Heart left ventricle (tissue), 16 donors: ENCODE measurements at regions of chr2 and their contacts with region 1.

Region 1: DNA sequence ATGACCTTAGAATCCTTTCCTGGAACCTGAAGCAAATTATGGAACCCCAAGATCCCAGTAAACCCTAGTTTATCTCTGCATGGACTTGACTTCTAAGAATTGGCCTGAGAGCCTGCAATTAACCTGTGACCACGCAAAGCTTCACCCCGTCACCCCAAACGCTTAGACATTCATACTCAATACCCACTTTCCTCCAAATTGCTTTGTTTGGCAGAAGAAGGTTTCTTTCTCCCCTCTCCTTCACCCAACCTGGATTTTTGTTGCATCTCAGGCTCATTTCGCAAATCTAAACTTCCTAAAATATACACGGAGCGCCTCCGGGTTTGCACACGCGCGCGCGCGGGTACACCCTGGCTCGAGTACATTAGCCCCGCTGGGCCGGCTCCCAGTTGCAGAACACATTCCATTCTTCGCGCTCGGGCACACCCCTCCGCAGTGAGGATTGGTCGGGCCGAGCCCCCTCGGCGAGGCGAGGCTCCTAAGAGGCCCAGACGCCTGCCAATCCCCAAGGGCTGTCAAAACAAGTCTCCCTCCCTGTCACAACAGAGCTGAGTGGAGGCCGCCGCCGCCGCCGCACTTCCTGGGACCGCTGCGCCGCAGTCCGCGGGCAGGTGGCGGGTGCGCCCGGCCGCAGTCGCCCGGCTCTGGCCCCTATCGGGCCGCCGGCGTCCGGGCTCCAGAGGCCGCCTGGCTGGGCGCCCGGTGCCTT is at the start of gene PLCL1:
- DNase-seq: peak; percentile 93 to 97 (median 95)
- ATAC-seq: peak; percentile 94 to 97 (median 96)
- H3K4me3 ChIP-seq: peak within 1 kb of the TSS; percentile 66 to 91 (median 84)
- H3K27ac ChIP-seq: peak within 1 kb of the TSS; percentile 70 to 90 (median 84)
- H3K4me1 ChIP-seq: peaks cover 0 to 35% (median 16%) of the 10 kb centered on the region in 12 donors
- H3K27me3 ChIP-seq: peaks cover 0 to 7% (median 0%) of the 10 kb centered on the region in 9 donors
- CTCF ChIP-seq: peak in 7 of 12 donors; percentile 17 to 42 (median 27)
- POLR2A ChIP-seq: peak; percentile 36 to 98
- total RNA-seq, gene PLCL1: 65.9 to 126 (median 97.6) TPM

Region 2: GRCh38 chr2:197878792-197879191 is 74.6 kb after region 1 on chr2:
- intact Hi-C with region 1: loop called in 2 of 10 experiments (anchors 5 to 10 kb)
- DNase-seq: no peak
- ATAC-seq: peak in 1 of 4 donors; percentile 27
- H3K4me3 ChIP-seq: no peak overlapping the region
- H3K27ac ChIP-seq: peak overlapping the region in 6 of 12 donors; percentile 13 to 43 (median 20)
- H3K4me1 ChIP-seq: peaks cover 0 to 76% (median 36%) of the 10 kb centered on the region in 12 donors
- H3K27me3 ChIP-seq: no peaks in the 10 kb centered on the region
- CTCF ChIP-seq: no peak
- POLR2A ChIP-seq: no peak

Region 3: GRCh38 chr2:197894751-197895274 is 90.6 kb after region 1 on chr2:
- intact Hi-C with region 1: loop called in 3 of 10 experiments (anchors 5 to 10 kb)
- DNase-seq: no peak
- ATAC-seq: no peak
- H3K4me3 ChIP-seq: no peak overlapping the region
- H3K27ac ChIP-seq: peak overlapping the region in 10 of 12 donors; percentile 56 to 83 (median 76)
- H3K4me1 ChIP-seq: peaks cover 3 to 63% (median 37%) of the 10 kb centered on the region in 12 donors
- H3K27me3 ChIP-seq: no peaks in the 10 kb centered on the region
- CTCF ChIP-seq: no peak
- POLR2A ChIP-seq: no peak

Region 4: GRCh38 chr2:197958592-197959150 is 154.5 kb after region 1 on chr2:
- intact Hi-C with region 1: loop called in 3 of 10 experiments (anchors 5 to 10 kb)
- DNase-seq: no peak
- ATAC-seq: peak; percentile 94 to 98 (median 96)
- H3K4me3 ChIP-seq: no peak overlapping the region
- H3K27ac ChIP-seq: peak overlapping the region in 9 of 12 donors; percentile 20 to 74 (median 44)
- H3K4me1 ChIP-seq: peaks cover 0 to 55% (median 17%) of the 10 kb centered on the region in 12 donors
- H3K27me3 ChIP-seq: no peaks in the 10 kb centered on the region
- CTCF ChIP-seq: no peak
- POLR2A ChIP-seq: no peak

Region 5: DNA sequence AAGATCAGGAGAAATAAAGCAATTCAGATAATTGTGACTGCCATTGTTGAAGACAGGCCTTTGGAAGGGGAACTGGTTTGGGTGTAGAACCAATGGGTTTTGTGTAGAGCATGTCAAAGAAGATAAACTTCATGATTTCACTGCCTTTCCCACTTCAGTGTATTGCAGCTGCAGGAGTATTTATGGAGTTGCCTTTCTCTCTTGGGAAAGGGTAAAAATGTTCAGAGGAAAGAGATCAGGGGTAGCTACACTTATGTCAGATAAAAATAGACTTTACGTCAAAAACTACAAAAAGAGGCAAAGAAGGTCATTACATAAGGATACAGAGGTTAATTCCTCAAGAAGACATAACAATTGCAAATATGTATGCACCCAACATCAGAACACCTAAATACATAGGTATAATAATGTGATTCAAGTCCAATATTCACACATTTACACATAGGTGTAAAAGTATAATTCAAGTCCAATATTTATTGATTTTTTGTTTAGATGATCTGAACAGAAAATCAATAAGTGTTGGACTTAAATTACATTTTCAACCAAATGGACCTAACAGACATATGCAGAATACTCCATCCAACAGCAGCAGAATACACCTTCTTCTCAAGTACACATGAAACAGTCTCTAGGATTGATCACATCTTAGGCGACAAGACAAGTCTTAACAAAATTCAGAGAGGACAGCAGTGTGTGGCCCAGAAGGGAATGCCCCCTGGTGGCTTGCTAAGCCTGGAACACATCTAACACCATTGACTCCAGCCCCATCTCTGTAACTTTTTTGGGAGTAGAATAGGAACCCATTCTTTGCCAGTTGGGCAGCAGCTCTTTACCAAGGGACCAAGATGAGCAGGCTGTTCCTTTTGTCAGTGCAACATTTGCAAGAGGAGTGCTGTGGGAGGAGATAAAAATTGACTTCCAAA is 249.8 kb after region 1 on chr2:
- intact Hi-C with region 1: loop called in 8 of 10 experiments (anchors 2 to 10 kb)
- DNase-seq: peak in 3 of 5 donors; percentile 25 to 34 (median 30)
- ATAC-seq: peak; percentile 33 to 68 (median 54)
- H3K4me3 ChIP-seq: no peak overlapping the region
- H3K27ac ChIP-seq: peak overlapping the region in 9 of 12 donors; percentile 9 to 57 (median 46)
- H3K4me1 ChIP-seq: peaks cover 0 to 45% (median 17%) of the 10 kb centered on the region in 12 donors
- H3K27me3 ChIP-seq: no peaks in the 10 kb centered on the region
- CTCF ChIP-seq: peak in 9 of 12 donors; percentile 14 to 55 (median 39)
- POLR2A ChIP-seq: no peak

Region 6: DNA sequence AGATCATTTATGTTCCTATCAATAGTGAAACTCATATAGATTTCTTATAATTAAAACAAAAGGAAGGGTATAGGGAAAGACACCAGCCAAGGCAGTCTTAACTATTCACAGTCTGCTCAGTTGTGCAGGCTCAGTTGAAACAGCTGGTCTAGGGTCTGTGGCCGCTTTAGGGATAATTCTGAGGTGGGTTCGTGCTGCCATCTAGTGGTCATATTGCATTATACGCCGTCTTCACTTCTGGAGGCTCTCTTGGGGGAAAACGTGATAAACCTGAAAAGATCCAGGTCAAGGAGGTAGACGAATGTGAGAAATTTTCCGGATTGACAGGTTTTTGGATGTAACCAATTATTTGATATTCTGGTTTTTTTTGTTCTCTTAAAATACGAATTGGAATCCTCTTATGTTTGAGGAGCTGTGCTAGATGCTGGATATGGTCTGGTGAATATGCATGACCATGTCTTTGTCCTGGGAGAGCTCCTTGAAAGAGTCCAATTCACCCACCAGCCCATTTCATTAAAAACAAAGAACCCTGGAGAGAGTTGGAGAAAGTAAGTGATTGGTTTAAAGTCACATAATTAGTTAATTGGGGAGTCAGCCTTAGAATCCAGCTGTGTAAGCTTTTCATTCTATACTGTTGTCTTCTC is 492.6 kb after region 1 on chr2:
- intact Hi-C with region 1: loop called in 9 of 10 experiments (anchors 1 to 5 kb)
- DNase-seq: peak in 4 of 5 donors; percentile 25 to 41 (median 38)
- ATAC-seq: peak; percentile 64 to 82 (median 76)
- H3K4me3 ChIP-seq: no peak overlapping the region
- H3K27ac ChIP-seq: no peak overlapping the region
- H3K4me1 ChIP-seq: peaks cover 0 to 5% (median 0%) of the 10 kb centered on the region in 12 donors
- H3K27me3 ChIP-seq: no peaks in the 10 kb centered on the region
- CTCF ChIP-seq: peak; percentile 72 to 91 (median 82)
- POLR2A ChIP-seq: no peak